B cell (primary cell): ENCODE measurements at regions of chr19 and their contacts with region 1.

Region 1: DNA sequence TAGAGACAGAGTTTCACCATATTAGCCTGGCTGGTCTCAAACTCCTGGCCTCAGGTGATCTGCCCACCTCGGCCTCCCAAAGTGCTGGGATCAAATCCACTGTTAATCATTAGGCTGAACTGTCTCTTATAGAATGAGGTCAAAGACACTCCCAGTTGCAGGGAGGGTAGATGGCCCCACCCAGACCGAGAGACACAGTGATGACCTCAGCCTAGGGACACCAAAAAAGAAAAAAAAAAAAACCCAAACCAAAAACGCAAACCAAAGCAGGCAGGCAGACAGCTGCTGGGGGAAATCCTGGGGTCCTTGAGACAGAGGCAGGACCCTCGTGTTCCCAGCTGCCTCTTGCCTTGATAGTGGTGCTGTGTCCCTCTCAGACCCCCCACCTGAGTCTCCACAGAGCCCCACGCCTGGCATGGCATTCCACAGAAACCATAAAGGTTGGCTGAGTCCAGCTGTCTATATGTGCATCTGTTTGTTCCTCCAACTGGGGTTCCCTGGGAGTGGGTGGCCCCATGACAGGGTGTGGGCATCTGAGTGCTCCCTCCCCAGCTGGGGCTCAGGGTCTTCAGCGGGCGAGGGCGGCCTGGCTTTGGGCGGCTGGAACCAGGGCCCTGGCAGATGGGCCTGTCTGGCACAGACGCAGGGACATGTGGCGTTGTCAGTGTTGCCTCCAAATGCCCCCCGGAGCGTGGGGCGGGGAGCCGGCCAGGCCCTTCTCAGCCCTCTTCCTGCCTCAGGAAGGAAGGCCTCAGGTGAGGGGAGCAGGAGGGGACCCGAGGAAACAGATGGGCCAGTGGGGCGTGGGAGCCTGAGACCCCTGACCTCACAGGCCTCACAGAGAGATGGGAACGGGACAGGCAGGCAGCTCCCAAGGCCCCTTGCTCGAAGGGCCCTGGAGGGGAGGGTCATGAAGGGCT is 5.2 kb downstream of the DAND5 start:
- DNase-seq: no peak
- ATAC-seq: no peak
- H3K4me3 ChIP-seq: no peak overlapping the region
- H3K4me3 Mint-ChIP-seq: no peak overlapping the region
- H3K27ac ChIP-seq: no peak overlapping the region
- H3K27ac Mint-ChIP-seq: no peak overlapping the region
- H3K4me1 ChIP-seq: peaks cover 0 to 5% of the 10 kb centered on the region in 2 donors
- H3K4me1 Mint-ChIP-seq: peaks cover 6% of the 10 kb centered on the region
- H3K27me3 ChIP-seq: peaks cover 0 to 14% (median 1%) of the 10 kb centered on the region in 4 experiments
- H3K27me3 Mint-ChIP-seq: peaks cover 12% of the 10 kb centered on the region
- CTCF ChIP-seq: no peak

Region 2: GRCh38 chr19:13033819-13034611 is 59.5 kb after region 1 on chr19:
- CTCF ChIA-PET with region 1: interaction called, 27 read pairs
- POLR2A ChIA-PET with region 1: interaction called, 3 read pairs
- intact Hi-C with region 1: no loop called
- DNase-seq: peak; percentile 56
- ATAC-seq: peak; percentile 83
- H3K4me3 ChIP-seq: no peak overlapping the region
- H3K4me3 Mint-ChIP-seq: no peak overlapping the region
- H3K27ac ChIP-seq: no peak overlapping the region
- H3K27ac Mint-ChIP-seq: no peak overlapping the region
- H3K4me1 ChIP-seq: no peaks in the 10 kb centered on the region
- H3K4me1 Mint-ChIP-seq: peaks cover 1% of the 10 kb centered on the region
- H3K27me3 ChIP-seq: peaks cover 0 to 10% (median 4%) of the 10 kb centered on the region in 4 experiments
- H3K27me3 Mint-ChIP-seq: peaks cover 17% of the 10 kb centered on the region
- CTCF ChIP-seq: peak; percentile 73

Region 3: GRCh38 chr19:13079542-13079986 is 105.0 kb after region 1 on chr19:
- CTCF ChIA-PET with region 1: interaction called, 12 read pairs
- POLR2A ChIA-PET with region 1: no interaction called
- intact Hi-C with region 1: no loop called
- DNase-seq: no peak
- ATAC-seq: no peak
- H3K4me3 ChIP-seq: no peak overlapping the region
- H3K4me3 Mint-ChIP-seq: no peak overlapping the region
- H3K27ac ChIP-seq: no peak overlapping the region
- H3K27ac Mint-ChIP-seq: no peak overlapping the region
- H3K4me1 ChIP-seq: no peaks in the 10 kb centered on the region
- H3K4me1 Mint-ChIP-seq: no peaks in the 10 kb centered on the region
- H3K27me3 ChIP-seq: no peaks in the 10 kb centered on the region
- H3K27me3 Mint-ChIP-seq: peaks cover 6% of the 10 kb centered on the region
- CTCF ChIP-seq: no peak

Region 4: GRCh38 chr19:13430790-13431582 is 456.4 kb after region 1 on chr19:
- CTCF ChIA-PET with region 1: interaction called, 3 read pairs
- POLR2A ChIA-PET with region 1: no interaction called
- intact Hi-C with region 1: loop called (anchors 5 kb)
- DNase-seq: peak; percentile 45
- ATAC-seq: peak; percentile 36
- H3K4me3 ChIP-seq: no peak overlapping the region
- H3K4me3 Mint-ChIP-seq: no peak overlapping the region
- H3K27ac ChIP-seq: no peak overlapping the region
- H3K27ac Mint-ChIP-seq: no peak overlapping the region
- H3K4me1 ChIP-seq: no peaks in the 10 kb centered on the region
- H3K4me1 Mint-ChIP-seq: no peaks in the 10 kb centered on the region
- H3K27me3 ChIP-seq: peaks cover 0 to 16% (median 4%) of the 10 kb centered on the region in 4 experiments
- H3K27me3 Mint-ChIP-seq: peaks cover 18% of the 10 kb centered on the region
- CTCF ChIP-seq: peak; percentile 33

Region 5: GRCh38 chr19:13588957-13589833 is 614.6 kb after region 1 on chr19:
- CTCF ChIA-PET with region 1: interaction called, 26 read pairs
- POLR2A ChIA-PET with region 1: no interaction called
- intact Hi-C with region 1: no loop called
- DNase-seq: peak; percentile 85
- ATAC-seq: peak; percentile 99
- H3K4me3 ChIP-seq: no peak overlapping the region
- H3K4me3 Mint-ChIP-seq: no peak overlapping the region
- H3K27ac ChIP-seq: no peak overlapping the region
- H3K27ac Mint-ChIP-seq: no peak overlapping the region
- H3K4me1 ChIP-seq: peaks cover 0 to 7% of the 10 kb centered on the region in 2 donors
- H3K4me1 Mint-ChIP-seq: peaks cover 1% of the 10 kb centered on the region
- H3K27me3 ChIP-seq: peaks cover 0 to 8% (median 0%) of the 10 kb centered on the region in 4 experiments
- H3K27me3 Mint-ChIP-seq: peaks cover 25% of the 10 kb centered on the region
- CTCF ChIP-seq: peak; percentile 95